ENCODE measurements at regions of chr4 and their contacts with region 1.

Region 1: DNA sequence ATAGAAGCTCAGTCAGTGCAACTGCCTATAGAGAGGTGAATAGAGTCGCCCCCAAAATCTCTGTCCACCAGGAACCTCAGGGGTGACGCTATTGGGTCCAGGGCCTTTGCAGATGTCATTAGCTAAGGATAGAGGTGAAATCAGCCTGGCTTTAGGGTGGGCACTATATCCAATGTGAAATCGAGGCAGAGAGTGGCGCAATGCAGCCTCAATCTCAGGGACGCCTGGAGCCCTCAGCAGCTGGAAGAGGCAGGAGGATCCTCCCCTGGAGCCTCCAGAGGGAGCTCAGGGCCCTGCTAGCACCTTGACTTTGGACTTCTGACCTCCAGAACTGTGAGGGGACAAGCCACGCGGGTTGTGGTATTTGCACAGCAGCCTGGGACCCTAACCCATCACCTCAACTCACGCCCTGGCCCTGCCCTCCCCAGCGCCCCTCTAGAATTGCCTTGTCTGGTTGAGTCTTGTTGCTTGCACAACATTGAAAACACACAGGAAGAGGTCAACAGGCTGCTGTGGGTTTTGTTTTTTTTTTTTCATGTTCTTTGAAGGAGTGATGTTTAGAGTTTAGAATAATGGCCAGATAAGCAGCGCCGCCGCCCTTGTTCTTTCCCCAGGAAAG is 89.4 kb upstream of the PSAPL1 start:
- DNase-seq: no peak
- H3K4me3 Mint-ChIP-seq: no peak overlapping the region
- H3K27ac Mint-ChIP-seq: no peak overlapping the region
- H3K4me1 Mint-ChIP-seq: no peaks in the 10 kb centered on the region
- H3K27me3 Mint-ChIP-seq: peaks cover 53% of the 10 kb centered on the region
- CTCF ChIP-seq: no peak

Region 2: DNA sequence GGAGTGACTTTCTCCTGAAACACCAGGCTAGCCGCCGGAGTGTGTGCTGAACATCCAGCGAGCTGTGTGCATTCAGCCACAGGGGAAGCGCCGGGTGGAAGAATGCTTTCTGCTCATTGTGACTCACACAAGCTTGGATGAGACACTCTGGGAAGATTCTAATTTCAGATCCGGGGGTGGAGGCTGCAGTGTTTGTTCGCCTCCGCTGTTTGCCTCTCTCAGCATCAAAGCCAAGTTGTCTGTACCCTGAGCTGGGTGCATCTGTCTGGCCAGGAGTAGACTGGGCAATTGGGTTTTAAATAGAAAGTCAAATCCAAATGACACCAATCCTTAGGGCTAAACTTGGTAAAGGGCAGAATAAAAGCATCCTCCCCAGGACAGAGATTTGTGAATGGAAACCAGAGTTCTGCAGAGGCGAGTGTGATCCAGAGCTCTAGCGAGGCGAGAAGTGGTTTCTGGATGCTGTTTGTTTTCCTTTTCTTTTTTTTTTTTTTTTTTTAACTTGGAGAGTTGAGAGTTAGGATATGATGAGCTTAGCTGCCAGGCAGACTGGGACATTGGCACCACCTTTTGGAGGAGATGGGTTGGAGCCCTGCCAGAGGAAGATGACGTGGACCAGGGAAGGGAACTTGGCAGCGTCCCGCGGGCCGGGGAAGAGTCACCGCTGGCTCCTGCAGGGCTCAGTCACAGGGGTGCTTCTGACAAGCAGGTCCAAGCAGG is 106.6 kb after region 1 on chr4:
- CTCF ChIA-PET with region 1: no interaction called
- POLR2A ChIA-PET with region 1: no interaction called
- intact Hi-C with region 1: loop called (anchors 10 kb)
- DNase-seq: peak; percentile 95
- H3K4me3 Mint-ChIP-seq: peak overlapping the region; percentile 24
- H3K27ac Mint-ChIP-seq: no peak overlapping the region
- H3K4me1 Mint-ChIP-seq: peaks cover 9% of the 10 kb centered on the region
- H3K27me3 Mint-ChIP-seq: peaks cover 32% of the 10 kb centered on the region
- CTCF ChIP-seq: no peak

Measured in MCF 10A (cell line).